Adrenal gland (tissue), 19 donors: ENCODE measurements at regions of chr17 and their contacts with region 1.

Region 1: GRCh38 chr17:33038740-33039139 is 47.1 kb downstream of the SPACA3 start:
- DNase-seq: peak in 6 of 7 donors; percentile 30 to 59 (median 45)
- H3K4me3 ChIP-seq: no peak overlapping the region
- H3K27ac ChIP-seq: no peak overlapping the region
- H3K4me1 ChIP-seq: no peaks in the 10 kb centered on the region
- H3K27me3 ChIP-seq: peaks cover 5% of the 10 kb centered on the region
- CTCF ChIP-seq: peak; percentile 40 to 64 (median 54)
- POLR2A ChIP-seq: no peak

Region 2: GRCh38 chr17:32757963-32758362 is 280.8 kb before region 1 on chr17:
- intact Hi-C with region 1: no loop called
- DNase-seq: no peak
- H3K4me3 ChIP-seq: no peak overlapping the region
- H3K27ac ChIP-seq: no peak overlapping the region
- H3K4me1 ChIP-seq: peaks cover 0 to 11% of the 10 kb centered on the region in 2 donors
- H3K27me3 ChIP-seq: no peaks in the 10 kb centered on the region
- CTCF ChIP-seq: no peak
- POLR2A ChIP-seq: no peak

Region 3: GRCh38 chr17:33674685-33675084 is 635.9 kb after region 1 on chr17:
- intact Hi-C with region 1: loop called in 1 of 2 experiments (anchors 10 kb)
- DNase-seq: peak; percentile 43 to 91 (median 68)
- H3K4me3 ChIP-seq: no peak overlapping the region
- H3K27ac ChIP-seq: no peak overlapping the region
- H3K4me1 ChIP-seq: no peaks in the 10 kb centered on the region
- H3K27me3 ChIP-seq: no peaks in the 10 kb centered on the region
- CTCF ChIP-seq: peak; percentile 62 to 82 (median 70)
- POLR2A ChIP-seq: no peak

Region 4: GRCh38 chr17:33750943-33751701 is 712.4 kb after region 1 on chr17:
- intact Hi-C with region 1: no loop called
- DNase-seq: peak; percentile 70 to 91 (median 72)
- H3K4me3 ChIP-seq: peak overlapping the region in 1 of 4 donors; percentile 15
- H3K27ac ChIP-seq: no peak overlapping the region
- H3K4me1 ChIP-seq: peaks cover 0 to 4% of the 10 kb centered on the region in 2 donors
- H3K27me3 ChIP-seq: no peaks in the 10 kb centered on the region
- CTCF ChIP-seq: peak; percentile 82 to 98 (median 90)
- POLR2A ChIP-seq: no peak